CD4-positive, alpha-beta T cell (primary cell): ENCODE measurements at regions of chr3 and their contacts with region 1.

Region 1: DNA sequence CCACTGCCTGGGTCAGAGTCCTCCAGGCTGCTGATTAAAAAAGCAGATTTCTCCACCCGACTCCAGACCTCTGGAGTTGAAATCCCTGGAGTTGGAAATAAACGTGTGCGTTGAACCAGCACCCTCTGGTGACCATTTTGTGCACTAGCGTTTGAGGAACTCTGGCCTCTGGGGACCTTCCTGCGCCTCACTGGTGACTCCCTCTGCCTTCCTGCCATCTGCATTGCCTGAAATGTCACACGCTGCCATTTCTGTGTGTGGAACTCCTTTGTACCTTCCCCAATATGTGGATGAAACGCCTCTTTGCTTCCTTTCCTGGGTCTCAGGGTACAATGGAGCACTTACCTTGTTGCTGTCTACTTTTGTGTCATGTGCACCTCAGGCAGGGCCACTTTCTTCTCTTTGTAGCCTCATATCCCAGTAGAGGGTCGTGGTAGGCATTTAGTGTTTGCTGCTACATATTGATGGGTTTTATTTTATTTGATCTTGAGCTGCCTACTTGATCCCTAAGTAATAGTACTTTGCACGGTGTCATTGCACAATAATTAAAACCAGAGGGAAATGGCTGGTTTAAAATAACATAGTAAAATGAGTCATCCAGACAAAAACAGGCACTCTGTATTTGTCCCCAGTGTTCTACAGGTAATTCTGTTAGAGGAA is 56.8 kb downstream of the GPR171 start:
- DNase-seq: peak in 12 of 14 experiments; percentile 23 to 78 (median 45)
- ATAC-seq: peak; percentile 98
- H3K4me3 ChIP-seq: no peak overlapping the region
- H3K4me3 Mint-ChIP-seq: no peak overlapping the region
- H3K27ac ChIP-seq: no peak overlapping the region
- H3K27ac Mint-ChIP-seq: no peak overlapping the region
- H3K4me1 ChIP-seq: peaks cover 8% of the 10 kb centered on the region
- H3K4me1 Mint-ChIP-seq: no peaks in the 10 kb centered on the region
- H3K27me3 ChIP-seq: no peaks in the 10 kb centered on the region
- H3K27me3 Mint-ChIP-seq: peaks cover 6% of the 10 kb centered on the region
- CTCF ChIP-seq: peak; percentile 89

Region 2: DNA sequence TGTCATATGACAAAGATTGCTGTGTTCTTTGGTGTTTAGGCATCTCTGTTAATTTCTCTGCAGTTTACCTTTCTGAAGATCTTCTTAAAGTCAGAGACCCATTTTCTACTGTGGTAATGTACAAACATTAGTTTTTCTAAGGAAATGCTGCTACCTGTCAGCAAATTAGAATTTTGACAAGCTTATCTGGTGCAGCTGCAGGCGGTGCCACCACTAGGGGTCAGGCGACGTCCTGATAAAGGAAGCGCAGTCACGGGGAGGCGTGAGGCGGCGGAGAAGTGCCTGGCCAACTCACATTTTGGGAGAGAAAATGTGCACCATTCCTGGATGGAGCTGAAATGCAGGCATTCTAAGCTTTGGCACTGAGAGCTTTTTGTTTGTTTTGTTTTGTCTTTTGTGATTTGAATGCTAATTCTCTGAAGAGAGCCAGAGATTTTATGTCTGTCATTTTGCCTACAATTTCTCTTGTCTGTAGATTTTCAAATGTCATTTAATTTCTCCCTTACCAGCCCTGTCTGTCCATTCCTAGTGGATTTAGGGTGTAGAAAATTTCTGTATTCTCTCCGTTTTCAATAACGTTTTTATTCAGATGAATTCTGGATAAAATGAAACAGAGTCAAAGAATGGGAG is 358.3 kb before region 1 on chr3:
- CTCF ChIA-PET with region 1: no interaction called
- POLR2A ChIA-PET with region 1: no interaction called
- intact Hi-C with region 1: loop called (anchors 1 to 2 kb)
- DNase-seq: peak; percentile 63 to 85 (median 72)
- ATAC-seq: peak; percentile 86
- H3K4me3 ChIP-seq: no peak overlapping the region
- H3K4me3 Mint-ChIP-seq: no peak overlapping the region
- H3K27ac ChIP-seq: no peak overlapping the region
- H3K27ac Mint-ChIP-seq: no peak overlapping the region
- H3K4me1 ChIP-seq: peaks cover 3% of the 10 kb centered on the region
- H3K4me1 Mint-ChIP-seq: no peaks in the 10 kb centered on the region
- H3K27me3 ChIP-seq: no peaks in the 10 kb centered on the region
- H3K27me3 Mint-ChIP-seq: peaks cover 7% of the 10 kb centered on the region
- CTCF ChIP-seq: peak; percentile 98

Region 3: DNA sequence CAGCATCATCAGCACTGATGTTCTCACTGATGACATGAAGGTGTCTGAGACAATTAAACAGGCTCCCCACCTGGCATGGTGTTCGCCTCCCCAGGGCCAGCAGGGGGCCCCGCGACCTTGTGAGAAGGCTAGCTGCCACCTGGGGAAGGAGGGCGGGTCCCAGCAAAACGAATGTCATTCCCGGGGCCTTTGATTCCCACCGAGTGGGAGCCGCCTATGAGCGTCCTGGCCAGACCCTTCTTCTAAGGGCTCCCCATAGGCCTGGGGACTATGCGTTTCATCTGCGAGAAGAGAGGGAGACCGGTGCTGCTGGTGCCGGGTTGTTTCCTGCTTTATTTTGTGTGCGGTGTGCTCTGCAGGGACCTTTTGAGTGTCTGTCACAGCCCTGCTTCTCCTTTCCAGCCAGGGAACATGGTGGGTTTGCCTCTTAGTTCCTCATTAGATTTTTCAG is 220.4 kb before region 1 on chr3:
- CTCF ChIA-PET with region 1: no interaction called
- POLR2A ChIA-PET with region 1: no interaction called
- intact Hi-C with region 1: loop called (anchors 1 to 2 kb)
- DNase-seq: peak; percentile 13 to 59 (median 34)
- ATAC-seq: peak; percentile 65
- H3K4me3 ChIP-seq: peak overlapping the region; percentile 29
- H3K4me3 Mint-ChIP-seq: peak overlapping the region; percentile 9
- H3K27ac ChIP-seq: no peak overlapping the region
- H3K27ac Mint-ChIP-seq: no peak overlapping the region
- H3K4me1 ChIP-seq: peaks cover 8% of the 10 kb centered on the region
- H3K4me1 Mint-ChIP-seq: peaks cover 8% of the 10 kb centered on the region
- H3K27me3 ChIP-seq: peaks cover 0 to 7% of the 10 kb centered on the region in 2 experiments
- H3K27me3 Mint-ChIP-seq: peaks cover 12% of the 10 kb centered on the region
- CTCF ChIP-seq: peak; percentile 66

Region 4: GRCh38 chr3:151124476-151124875 is 21.7 kb before region 1 on chr3:
- CTCF ChIA-PET with region 1: no interaction called
- POLR2A ChIA-PET with region 1: no interaction called
- intact Hi-C with region 1: no loop called
- DNase-seq: no peak
- ATAC-seq: no peak
- H3K4me3 ChIP-seq: no peak overlapping the region
- H3K4me3 Mint-ChIP-seq: no peak overlapping the region
- H3K27ac ChIP-seq: no peak overlapping the region
- H3K27ac Mint-ChIP-seq: no peak overlapping the region
- H3K4me1 ChIP-seq: no peaks in the 10 kb centered on the region
- H3K4me1 Mint-ChIP-seq: no peaks in the 10 kb centered on the region
- H3K27me3 ChIP-seq: no peaks in the 10 kb centered on the region
- H3K27me3 Mint-ChIP-seq: peaks cover 1% of the 10 kb centered on the region
- CTCF ChIP-seq: no peak

Region 5: GRCh38 chr3:151477591-151478334 is 331.6 kb after region 1 on chr3:
- CTCF ChIA-PET with region 1: no interaction called
- POLR2A ChIA-PET with region 1: no interaction called
- intact Hi-C with region 1: no loop called
- DNase-seq: no peak
- ATAC-seq: no peak
- H3K4me3 ChIP-seq: no peak overlapping the region
- H3K4me3 Mint-ChIP-seq: no peak overlapping the region
- H3K27ac ChIP-seq: no peak overlapping the region
- H3K27ac Mint-ChIP-seq: no peak overlapping the region
- H3K4me1 ChIP-seq: no peaks in the 10 kb centered on the region
- H3K4me1 Mint-ChIP-seq: no peaks in the 10 kb centered on the region
- H3K27me3 ChIP-seq: no peaks in the 10 kb centered on the region
- H3K27me3 Mint-ChIP-seq: peaks cover 6% of the 10 kb centered on the region
- CTCF ChIP-seq: no peak